Activated CD4-positive, alpha-beta T cell treated with anti-CD3 and anti-CD28 coated beads, Interleukin-2, amount 10 ng/mL, durations not matched to agents 24 days and 14 days (primary cell): ENCODE measurements at regions of chr19 and their contacts with region 1.

Region 1: DNA sequence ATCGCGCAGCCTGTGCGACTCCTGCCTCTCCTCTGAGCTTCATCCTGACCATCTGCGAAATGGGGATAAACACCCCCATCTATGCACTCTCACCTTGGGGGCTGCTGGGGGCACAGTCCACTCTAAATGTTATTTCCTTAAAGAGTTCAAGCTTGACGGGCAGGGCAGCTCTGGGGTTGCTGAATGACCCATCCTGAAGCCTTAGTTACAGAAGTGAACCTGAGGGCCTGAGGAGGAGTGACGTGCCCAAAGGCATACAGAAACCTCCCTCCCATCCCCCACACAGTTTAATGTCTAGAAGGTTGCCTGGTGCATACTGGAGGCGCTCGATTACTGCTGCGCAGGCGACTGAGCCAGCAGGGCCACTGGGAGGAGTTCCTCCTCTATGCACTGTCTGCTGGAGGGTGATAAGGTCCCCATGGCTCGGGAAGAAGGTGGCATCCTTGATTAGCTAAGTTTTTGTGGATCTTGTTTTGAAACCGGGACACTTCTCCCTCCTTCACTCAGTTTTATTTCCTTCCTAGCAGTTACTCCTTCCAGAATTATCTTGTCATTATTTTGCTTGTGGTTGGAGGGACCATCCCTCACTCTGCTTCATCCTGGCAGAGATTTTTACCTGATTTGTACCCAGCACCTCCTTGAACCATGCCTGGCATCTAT is 573 bp upstream of the FKBP8 start:
- DNase-seq: peak; percentile 96
- H3K4me3 Mint-ChIP-seq: peak overlapping the region; percentile 99
- H3K27ac Mint-ChIP-seq: peak overlapping the region; percentile 99
- H3K4me1 Mint-ChIP-seq: peaks cover 22% of the 10 kb centered on the region
- H3K27me3 Mint-ChIP-seq: no peaks in the 10 kb centered on the region

Region 2: GRCh38 chr19:18557474-18558201 is 13.7 kb after region 1 on chr19 and contains the start of gene KXD1:
- intact Hi-C with region 1: loop called (anchors 1 kb)
- DNase-seq: peak; percentile 99
- H3K4me3 Mint-ChIP-seq: peak within 1 kb of the TSS; percentile 97
- H3K27ac Mint-ChIP-seq: peak within 1 kb of the TSS; percentile 93
- H3K4me1 Mint-ChIP-seq: peaks cover 18% of the 10 kb centered on the region
- H3K27me3 Mint-ChIP-seq: no peaks in the 10 kb centered on the region
- total RNA-seq, gene KXD1: 124 and 134 TPM in 2 replicates

Region 3: DNA sequence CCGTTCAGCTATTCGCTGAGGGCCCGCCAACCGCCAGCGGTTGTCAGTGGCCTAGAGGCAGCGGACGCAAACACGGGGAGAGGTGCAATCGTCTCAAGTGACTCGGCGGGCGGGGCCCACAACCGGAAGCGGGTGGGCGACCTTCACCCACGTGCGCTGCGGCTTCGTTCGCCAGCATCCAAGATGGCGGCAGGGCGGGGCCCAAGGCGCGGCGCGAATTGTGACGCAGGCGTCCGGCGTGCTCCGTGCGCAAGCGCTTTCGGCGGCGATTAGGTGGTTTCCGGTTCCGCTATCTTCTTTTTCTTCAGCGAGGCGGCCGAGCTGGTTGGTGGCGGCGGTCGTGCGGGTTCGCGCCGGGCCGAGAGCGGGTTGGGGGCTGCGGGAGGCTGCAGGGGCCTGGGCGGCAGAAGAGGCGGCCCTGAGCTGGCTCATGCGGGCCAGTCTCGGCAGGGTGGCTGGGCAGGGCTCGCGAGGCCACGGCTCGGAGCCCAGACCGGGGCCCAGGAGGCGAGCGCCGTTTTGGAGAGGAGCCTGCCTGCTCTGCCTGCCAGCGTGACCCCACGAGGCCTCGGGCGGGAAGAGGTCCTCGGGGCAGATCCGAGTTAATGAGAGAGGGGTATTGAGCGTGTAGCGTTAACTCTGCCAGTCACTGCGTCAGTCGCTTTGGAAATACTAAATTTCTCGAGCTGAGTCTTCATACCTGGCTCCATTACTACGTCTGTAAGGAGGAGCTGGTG is 27.8 kb after region 1 on chr19 and contains the start of gene UBA52:
- intact Hi-C with region 1: loop called (anchors 1 kb)
- DNase-seq: peak; percentile 100
- H3K4me3 Mint-ChIP-seq: peak within 1 kb of the TSS; percentile 99
- H3K27ac Mint-ChIP-seq: peak within 1 kb of the TSS; percentile 95
- H3K4me1 Mint-ChIP-seq: peaks cover 24% of the 10 kb centered on the region
- H3K27me3 Mint-ChIP-seq: no peaks in the 10 kb centered on the region
- total RNA-seq, gene UBA52: 1,581 and 1,604 TPM in 2 replicates

Region 4: GRCh38 chr19:18636183-18636968 is 92.4 kb after region 1 on chr19:
- intact Hi-C with region 1: loop called (anchors 1 kb)
- DNase-seq: peak; percentile 100
- H3K4me3 Mint-ChIP-seq: peak overlapping the region; percentile 99
- H3K27ac Mint-ChIP-seq: peak overlapping the region; percentile 93
- H3K4me1 Mint-ChIP-seq: peaks cover 22% of the 10 kb centered on the region
- H3K27me3 Mint-ChIP-seq: peaks cover 9% of the 10 kb centered on the region